Activated naive CD4-positive, alpha-beta T cell treated with anti-CD3 and anti-CD28 coated beads for 36 hours (primary cell): ENCODE measurements at regions of chrX and their contacts with region 1.

Region 1: DNA sequence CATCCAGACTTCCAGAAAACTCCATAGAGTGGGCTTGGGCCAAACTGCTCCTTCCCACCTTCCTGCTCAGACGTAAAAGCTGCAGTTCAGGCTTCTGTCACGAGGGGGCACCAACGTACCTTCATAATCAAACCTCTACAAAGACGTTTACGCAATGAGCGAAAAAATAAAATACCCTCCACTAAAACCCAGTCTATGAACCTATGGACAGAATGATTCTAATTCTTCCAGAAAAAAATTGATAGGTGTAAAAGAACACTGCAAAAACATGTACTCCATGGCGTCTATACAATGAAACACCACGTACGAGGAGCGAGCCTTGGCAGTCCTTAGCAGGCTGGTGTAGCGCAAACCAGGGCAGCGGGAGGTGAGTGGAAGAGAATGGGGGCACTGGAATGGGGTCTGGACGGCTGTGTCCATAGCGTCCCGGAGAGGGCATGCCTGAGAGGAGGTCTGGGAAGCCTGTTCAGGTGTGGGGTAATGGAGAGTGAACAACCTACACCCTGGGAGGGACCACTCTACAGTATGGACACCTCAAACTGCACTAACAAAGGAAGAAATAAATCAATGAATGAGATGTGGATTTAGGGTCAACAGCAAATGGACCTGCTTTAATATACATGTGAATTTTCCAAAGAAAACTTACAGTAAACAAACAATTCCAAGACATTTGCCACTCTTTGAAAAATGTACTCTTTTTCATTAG is 14.4 kb upstream of the RAB40A start:
- DNase-seq: peak; percentile 80
- H3K4me3 Mint-ChIP-seq: peak overlapping the region; percentile 48
- H3K27ac Mint-ChIP-seq: no peak overlapping the region
- H3K4me1 Mint-ChIP-seq: peaks cover 5% of the 10 kb centered on the region
- H3K27me3 Mint-ChIP-seq: no peaks in the 10 kb centered on the region

Region 2: GRCh38 chrX:102768987-102769761 is 764.5 kb before region 1 on chrX:
- CTCF ChIA-PET with region 1: no interaction called
- intact Hi-C with region 1: no loop called
- DNase-seq: peak; percentile 87
- H3K4me3 Mint-ChIP-seq: peak overlapping the region; percentile 96
- H3K27ac Mint-ChIP-seq: peak overlapping the region; percentile 86
- H3K4me1 Mint-ChIP-seq: peaks cover 8% of the 10 kb centered on the region
- H3K27me3 Mint-ChIP-seq: no peaks in the 10 kb centered on the region

Region 3: DNA sequence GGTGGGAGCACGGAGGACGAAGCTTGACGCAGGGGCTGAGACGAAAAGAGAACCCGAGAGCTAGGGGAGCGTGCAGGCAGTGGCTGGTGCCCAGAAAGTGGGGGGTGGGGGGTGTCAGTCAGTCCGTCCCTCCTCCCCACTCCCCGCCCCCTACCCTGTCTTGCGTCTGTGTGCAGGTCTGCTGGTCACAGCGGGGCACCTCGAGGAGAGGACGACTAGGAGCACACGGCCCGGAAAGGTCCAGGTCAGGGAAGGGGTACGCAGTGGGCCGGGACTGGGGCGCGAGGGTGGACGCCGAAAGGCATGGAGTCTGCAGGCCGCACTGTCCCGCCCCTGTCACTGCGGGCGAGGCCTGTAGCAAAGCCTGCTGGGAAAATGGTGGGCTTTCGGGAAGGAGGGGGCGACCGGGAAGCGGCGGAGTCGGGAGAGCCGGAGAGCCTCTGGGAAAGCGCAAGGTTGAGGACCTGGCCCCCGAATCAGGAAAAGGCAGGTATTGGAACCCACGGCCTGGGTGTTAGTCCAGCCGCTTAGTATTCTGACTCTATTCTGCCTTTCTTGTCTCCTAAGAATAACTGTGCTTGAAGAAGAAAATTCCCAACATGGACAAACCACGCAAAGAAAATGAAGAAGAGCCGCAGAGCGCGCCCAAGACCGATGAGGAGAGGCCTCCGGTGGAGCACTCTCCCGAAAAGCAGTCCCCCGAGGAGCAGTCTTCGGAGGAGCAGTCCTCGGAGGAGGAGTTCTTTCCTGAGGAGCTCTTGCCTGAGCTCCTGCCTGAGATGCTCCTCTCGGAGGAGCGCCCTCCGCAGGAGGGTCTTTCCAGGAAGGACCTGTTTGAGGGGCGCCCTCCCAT is 95.9 kb after region 1 on chrX:
- CTCF ChIA-PET with region 1: no interaction called
- intact Hi-C with region 1: loop called (anchors 5 kb)
- DNase-seq: peak; percentile 33
- H3K4me3 Mint-ChIP-seq: peak overlapping the region; percentile 87
- H3K27ac Mint-ChIP-seq: peak overlapping the region; percentile 87
- H3K4me1 Mint-ChIP-seq: peaks cover 19% of the 10 kb centered on the region
- H3K27me3 Mint-ChIP-seq: no peaks in the 10 kb centered on the region

Region 4: DNA sequence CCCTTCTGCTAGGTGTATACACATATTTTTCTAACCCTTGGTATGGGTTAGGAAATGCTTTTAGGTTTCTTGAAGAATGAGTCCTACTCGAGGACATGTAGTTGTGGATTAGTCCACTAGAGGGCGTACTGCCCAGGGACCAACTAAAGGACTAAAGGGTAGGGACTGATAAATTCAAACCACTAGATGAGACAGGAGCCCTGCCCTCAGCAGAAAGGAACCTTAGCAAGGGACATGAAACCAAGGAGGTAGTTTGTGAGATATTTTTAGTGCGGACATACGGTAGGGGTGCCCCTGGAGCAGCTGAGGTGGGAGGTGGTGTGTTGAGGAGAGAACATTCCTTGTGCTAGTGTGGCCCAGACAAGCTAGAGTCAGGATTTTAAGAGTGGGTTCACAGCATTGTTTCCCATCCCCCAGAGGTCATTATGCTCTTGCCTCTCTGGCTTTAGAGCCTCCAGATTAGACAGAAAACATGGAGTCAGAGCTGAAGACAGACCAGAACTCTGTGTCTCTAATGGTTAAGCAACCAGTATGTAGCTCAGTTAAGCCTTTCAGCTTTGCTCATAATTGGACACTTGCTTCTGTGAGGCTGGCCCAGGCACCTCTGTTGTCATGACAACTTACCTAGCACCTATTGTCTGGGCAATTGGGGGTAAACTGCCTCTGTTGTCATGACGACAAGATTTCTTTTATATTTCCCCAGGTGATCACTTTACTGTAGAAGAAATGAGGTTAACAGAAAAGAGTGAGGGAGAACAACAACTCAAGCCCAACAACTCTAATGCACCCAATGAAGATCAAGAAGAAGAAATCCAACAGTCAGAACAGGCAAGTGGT is 178.1 kb after region 1 on chrX:
- CTCF ChIA-PET with region 1: no interaction called
- intact Hi-C with region 1: loop called (anchors 2 kb)
- DNase-seq: peak; percentile 60
- H3K4me3 Mint-ChIP-seq: no peak overlapping the region
- H3K27ac Mint-ChIP-seq: no peak overlapping the region
- H3K4me1 Mint-ChIP-seq: no peaks in the 10 kb centered on the region
- H3K27me3 Mint-ChIP-seq: peaks cover 3% of the 10 kb centered on the region

Region 5: DNA sequence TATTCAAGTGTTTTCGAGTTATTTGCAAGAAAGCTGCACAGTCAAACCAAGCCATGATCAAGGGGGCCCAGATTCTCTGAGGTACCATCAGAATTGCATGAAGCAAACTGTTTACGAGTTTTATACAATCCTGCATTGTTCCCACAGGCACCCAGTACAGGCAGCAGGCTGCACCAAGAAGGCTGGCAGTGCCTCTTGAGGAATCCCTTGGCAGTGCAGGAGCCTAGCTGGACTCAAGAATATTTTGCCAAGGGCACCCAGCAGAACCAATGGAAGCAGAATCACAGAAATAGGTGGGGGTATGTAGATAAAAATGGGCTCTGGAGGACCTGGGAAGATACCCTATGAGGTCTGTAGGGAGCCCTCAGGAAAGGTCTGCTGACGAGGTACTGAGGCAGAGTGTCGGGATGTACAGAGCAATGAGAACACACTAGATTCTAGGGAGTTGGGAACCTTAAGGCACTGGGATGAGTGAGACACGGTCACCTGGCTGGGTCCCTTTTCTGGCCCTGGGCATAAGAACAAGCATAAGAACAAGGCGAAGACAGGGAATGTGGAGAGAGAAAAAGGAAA is 240.5 kb after region 1 on chrX:
- CTCF ChIA-PET with region 1: interaction called, 3 read pairs
- intact Hi-C with region 1: loop called (anchors 1 kb)
- DNase-seq: no peak
- H3K4me3 Mint-ChIP-seq: no peak overlapping the region
- H3K27ac Mint-ChIP-seq: no peak overlapping the region
- H3K4me1 Mint-ChIP-seq: no peaks in the 10 kb centered on the region
- H3K27me3 Mint-ChIP-seq: no peaks in the 10 kb centered on the region

Region 6: DNA sequence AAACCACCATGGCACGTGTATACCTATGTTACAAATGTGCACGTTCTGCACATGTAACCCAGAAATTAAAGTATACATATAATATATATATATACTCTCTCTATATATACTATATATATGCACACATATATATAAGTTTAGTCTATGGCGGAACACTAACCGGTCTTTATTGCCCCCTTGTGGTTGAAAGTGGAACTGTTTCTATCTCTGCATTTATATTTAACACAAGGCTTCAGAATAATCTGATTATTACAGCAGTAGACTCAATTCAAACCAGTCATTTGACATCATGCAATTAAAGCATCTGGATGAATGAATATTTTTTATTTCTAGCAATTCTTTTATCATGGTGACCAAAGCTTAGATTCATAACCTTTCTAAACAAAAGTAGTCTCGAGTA is 283.8 kb after region 1 on chrX:
- CTCF ChIA-PET with region 1: interaction called, 7 read pairs
- intact Hi-C with region 1: loop called (anchors 1 kb)
- DNase-seq: peak; percentile 25
- H3K4me3 Mint-ChIP-seq: no peak overlapping the region
- H3K27ac Mint-ChIP-seq: no peak overlapping the region
- H3K4me1 Mint-ChIP-seq: no peaks in the 10 kb centered on the region
- H3K27me3 Mint-ChIP-seq: peaks cover 8% of the 10 kb centered on the region